ENCODE measurements at regions of chr22 and their contacts with region 1.

Region 1: GRCh38 chr22:46116491-46116958 is 33.8 kb upstream of the PPARA start:
- DNase-seq: peak; percentile 80 to 85
- ATAC-seq: peak; percentile 46 to 77
- H3K4me3 ChIP-seq: no peak overlapping the region
- H3K27ac ChIP-seq: peak overlapping the region; percentile 60 to 62; a peak in 5 of 6 replicates
- H3K4me1 ChIP-seq: peaks cover 53% of the 10 kb centered on the region
- CTCF ChIP-seq: peak; percentile 78
- EP300 ChIP-seq: no peak
- POLR2A ChIP-seq: no peak
- RAD21 ChIP-seq: peak; percentile 80 to 89

Region 2: GRCh38 chr22:45994491-45995404 is 121.8 kb before region 1 on chr22:
- CTCF ChIA-PET with region 1: interaction called, 133 read pairs
- POLR2A ChIA-PET with region 1: no interaction called
- DNase-seq: peak; percentile 49 to 55
- ATAC-seq: peak; percentile 74 to 90
- H3K4me3 ChIP-seq: no peak overlapping the region
- H3K27ac ChIP-seq: peak overlapping the region; percentile 51 to 72; a peak in 4 of 6 replicates
- H3K4me1 ChIP-seq: no peaks in the 10 kb centered on the region
- CTCF ChIP-seq: peak; percentile 75
- EP300 ChIP-seq: no peak
- POLR2A ChIP-seq: no peak
- RAD21 ChIP-seq: peak; percentile 88 to 93

Region 3: DNA sequence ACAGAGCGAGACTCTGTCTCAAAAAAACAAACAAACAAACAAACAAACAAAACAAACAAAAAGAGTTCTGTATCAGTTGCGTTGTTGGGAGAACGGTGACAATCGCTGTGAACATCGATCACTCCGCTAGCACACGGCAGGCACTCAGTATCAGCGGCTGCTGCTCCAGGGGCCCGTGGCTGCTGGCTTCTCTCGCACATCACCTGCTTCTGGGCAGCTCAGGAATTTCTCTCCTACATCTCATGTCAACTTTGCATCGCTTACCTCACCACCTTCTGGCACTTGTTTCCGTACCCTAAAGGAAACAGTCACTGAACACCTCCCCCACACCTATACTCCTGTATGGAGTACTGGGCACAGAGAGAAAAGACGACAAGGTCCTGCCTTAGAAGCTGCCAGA is 69.3 kb before region 1 on chr22:
- CTCF ChIA-PET with region 1: no interaction called
- POLR2A ChIA-PET with region 1: no interaction called
- DNase-seq: no peak
- ATAC-seq: no peak
- H3K4me3 ChIP-seq: no peak overlapping the region
- H3K27ac ChIP-seq: no peak overlapping the region
- H3K4me1 ChIP-seq: peaks cover 4% of the 10 kb centered on the region
- CTCF ChIP-seq: no peak
- EP300 ChIP-seq: no peak
- POLR2A ChIP-seq: no peak
- RAD21 ChIP-seq: no peak

Region 4: GRCh38 chr22:46071451-46072109 is 44.9 kb before region 1 on chr22:
- CTCF ChIA-PET with region 1: interaction called, 20 read pairs
- POLR2A ChIA-PET with region 1: no interaction called
- DNase-seq: peak in 1 of 2 experiments; percentile 92
- ATAC-seq: peak; percentile 9 to 37; a peak in 4 of 6 replicates
- H3K4me3 ChIP-seq: peak overlapping the region; percentile 73
- H3K27ac ChIP-seq: peak overlapping the region; percentile 99 to 100
- H3K4me1 ChIP-seq: peaks cover 17% of the 10 kb centered on the region
- CTCF ChIP-seq: no peak
- EP300 ChIP-seq: no peak
- POLR2A ChIP-seq: peak; percentile 87
- RAD21 ChIP-seq: no peak

Region 5: DNA sequence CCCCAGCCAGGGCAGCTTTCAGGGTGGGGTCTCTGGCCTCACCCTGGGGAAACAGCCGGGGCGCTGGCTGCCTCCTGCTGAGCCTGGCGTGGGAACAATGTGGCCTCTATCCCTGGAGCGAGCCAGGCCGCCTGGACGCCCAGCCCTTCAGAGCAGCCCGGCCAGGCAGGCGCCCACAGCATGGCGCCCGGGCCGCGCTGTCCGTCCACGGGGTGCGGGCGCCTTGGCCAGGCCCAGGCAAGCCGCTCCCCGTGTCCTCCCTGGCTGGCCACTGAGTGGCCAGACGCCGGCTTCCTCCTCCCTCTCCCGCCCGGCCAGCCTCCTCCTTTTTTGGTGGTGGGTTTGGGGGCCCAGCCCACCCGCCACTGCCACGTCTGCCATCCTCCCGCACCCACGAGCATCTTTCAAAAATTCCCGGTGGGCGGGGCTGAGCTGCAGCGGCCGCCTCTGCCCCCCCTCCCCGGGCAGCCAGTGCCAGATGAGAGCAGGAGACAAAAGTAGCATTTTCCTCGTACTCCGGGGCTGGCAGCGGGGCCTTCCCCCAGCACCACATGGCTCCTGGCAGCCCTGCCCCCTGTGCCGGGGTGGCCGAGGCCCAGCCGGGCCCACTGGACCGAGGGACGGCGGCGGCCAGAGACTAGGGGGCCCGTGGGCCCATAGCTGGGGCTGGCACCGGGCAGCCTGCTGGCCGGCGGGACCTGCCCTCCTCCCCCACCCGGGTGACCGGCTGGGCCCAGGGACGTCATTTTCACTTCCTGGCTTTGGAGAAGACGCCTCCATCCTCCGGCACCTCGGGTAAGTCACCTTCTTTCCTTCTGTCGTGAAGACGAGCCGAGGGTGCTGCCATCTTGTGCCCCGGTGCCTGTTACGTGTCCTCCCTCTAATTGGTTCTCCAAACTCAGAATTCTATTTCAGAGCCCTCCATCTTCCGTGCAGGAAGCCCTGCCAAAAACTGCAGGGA is 36.4 kb before region 1 on chr22:
- CTCF ChIA-PET with region 1: interaction called, 20 read pairs
- POLR2A ChIA-PET with region 1: no interaction called
- DNase-seq: peak in 1 of 2 experiments; percentile 93
- ATAC-seq: peak; percentile 64 to 71
- H3K4me3 ChIP-seq: peak overlapping the region; percentile 52
- H3K27ac ChIP-seq: peak overlapping the region; percentile 99 to 100
- H3K4me1 ChIP-seq: peaks cover 54% of the 10 kb centered on the region
- CTCF ChIP-seq: no peak
- EP300 ChIP-seq: no peak
- POLR2A ChIP-seq: peak; percentile 30
- RAD21 ChIP-seq: no peak

Region 6: GRCh38 chr22:46309526-46310085 is 193.1 kb after region 1 on chr22:
- CTCF ChIA-PET with region 1: interaction called, 272 read pairs
- POLR2A ChIA-PET with region 1: no interaction called
- DNase-seq: no peak
- ATAC-seq: no peak
- H3K4me3 ChIP-seq: no peak overlapping the region
- H3K27ac ChIP-seq: no peak overlapping the region
- H3K4me1 ChIP-seq: no peaks in the 10 kb centered on the region
- CTCF ChIP-seq: no peak
- EP300 ChIP-seq: no peak
- POLR2A ChIP-seq: no peak
- RAD21 ChIP-seq: no peak

Measured in A549 (cell line).